ENCODE measurements at regions of chr6 and their contacts with region 1.

Region 1: DNA sequence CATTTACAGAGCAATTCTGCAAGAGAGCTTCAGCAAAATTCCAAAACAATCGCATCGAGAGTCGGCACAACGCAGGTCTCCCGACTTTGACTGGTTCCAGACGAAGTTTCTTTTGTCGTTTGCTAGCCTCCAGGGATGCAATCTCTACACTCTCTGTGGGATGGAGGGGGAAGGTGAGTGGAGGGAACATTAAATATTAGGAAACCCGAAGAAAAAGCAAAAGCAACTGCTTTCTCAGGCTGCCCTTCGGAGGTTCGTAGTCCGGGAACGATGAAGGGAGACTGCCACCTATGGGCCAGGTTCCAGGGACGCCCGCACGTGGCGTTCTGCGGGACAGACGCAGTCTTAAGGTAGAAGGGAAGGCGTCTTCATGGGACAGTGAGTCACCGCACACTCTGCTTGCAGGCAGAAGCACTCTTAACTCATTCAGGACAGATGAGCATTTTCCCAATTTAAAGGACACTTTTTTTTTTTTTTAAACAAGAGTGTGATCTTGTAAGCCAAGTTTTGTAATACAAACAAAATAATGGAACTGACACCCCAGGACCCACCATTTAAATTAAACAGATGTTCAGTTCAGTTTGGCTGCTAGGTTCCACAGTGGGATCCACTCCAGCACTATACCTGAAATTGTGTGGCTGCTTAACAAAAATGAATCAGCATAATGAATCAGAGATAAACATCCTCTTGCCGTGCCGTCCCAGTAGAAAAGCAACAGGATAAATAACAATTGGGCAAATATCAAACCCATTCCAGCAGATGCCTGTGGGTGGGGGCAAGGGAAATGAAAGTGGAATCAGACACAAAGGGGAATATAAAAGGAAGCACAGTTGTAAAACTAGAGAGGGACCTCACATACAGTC is 65.8 kb upstream of the ARMC2 start:
- DNase-seq: peak; percentile 81
- ATAC-seq: peak; percentile 88
- H3K4me3 ChIP-seq: peak overlapping the region; percentile 53
- H3K27ac ChIP-seq: peak overlapping the region; percentile 71
- H3K4me1 ChIP-seq: peaks cover 9% of the 10 kb centered on the region
- H3K27me3 ChIP-seq: no peaks in the 10 kb centered on the region
- CTCF ChIP-seq: peak; percentile 82
- POLR2A ChIP-seq: no peak
- RAD21 ChIP-seq: peak; percentile 84

Region 2: DNA sequence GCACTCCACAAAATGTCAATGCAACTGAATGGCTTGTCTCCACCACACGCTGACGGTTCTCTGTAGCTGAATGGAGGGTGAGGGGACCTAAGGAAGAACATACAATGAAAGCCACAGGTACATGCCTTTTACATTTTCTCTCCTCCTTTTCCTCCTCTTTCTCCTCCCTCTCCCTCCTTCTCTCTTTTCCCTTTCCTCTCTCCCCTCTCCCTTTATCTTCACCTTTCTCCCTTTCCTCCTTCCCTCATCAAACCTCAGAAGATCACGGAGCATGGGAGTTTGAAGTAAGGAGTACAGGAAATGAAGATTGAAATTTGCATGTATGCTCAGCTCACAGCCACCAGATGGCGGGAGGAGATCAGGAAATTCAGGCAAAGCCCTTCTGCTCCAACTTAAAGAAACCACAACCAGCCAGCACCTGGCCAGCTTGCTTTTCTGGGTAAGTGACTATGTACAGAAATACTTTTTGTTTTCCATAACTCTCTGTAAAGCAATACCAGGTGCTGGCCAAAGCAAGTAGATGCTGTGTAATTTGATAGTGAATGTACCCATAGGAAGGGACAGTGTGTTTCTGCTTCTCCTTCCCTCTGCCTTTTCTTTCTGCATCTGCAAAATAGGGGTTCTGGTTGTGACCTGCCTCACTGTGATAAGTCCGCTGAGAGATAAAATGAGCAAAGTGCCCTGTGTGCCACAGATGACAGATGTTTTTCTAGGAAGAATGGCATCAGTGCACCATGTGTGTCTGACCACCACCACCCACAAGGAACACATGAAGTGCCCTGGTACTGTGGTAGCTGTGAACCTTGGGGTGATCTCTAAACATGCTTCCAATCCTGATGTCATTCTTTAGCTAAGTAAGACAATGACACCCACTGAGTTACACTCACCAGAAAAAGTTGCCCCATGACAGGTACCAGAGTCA is 240.3 kb before region 1 on chr6:
- CTCF ChIA-PET with region 1: no interaction called
- POLR2A ChIA-PET with region 1: no interaction called
- dilution Hi-C with region 1: no loop called
- in situ Hi-C with region 1: loop called (anchors 5 kb)
- intact Hi-C with region 1: loop called (anchors 1 kb)
- DNase-seq: peak; percentile 87
- ATAC-seq: peak; percentile 86
- H3K4me3 ChIP-seq: no peak overlapping the region
- H3K27ac ChIP-seq: no peak overlapping the region
- H3K4me1 ChIP-seq: peaks cover 10% of the 10 kb centered on the region
- H3K27me3 ChIP-seq: no peaks in the 10 kb centered on the region
- CTCF ChIP-seq: peak; percentile 91
- POLR2A ChIP-seq: peak; percentile 47; the same call in 1 of the 2 replicates
- RAD21 ChIP-seq: peak; percentile 100

Region 3: DNA sequence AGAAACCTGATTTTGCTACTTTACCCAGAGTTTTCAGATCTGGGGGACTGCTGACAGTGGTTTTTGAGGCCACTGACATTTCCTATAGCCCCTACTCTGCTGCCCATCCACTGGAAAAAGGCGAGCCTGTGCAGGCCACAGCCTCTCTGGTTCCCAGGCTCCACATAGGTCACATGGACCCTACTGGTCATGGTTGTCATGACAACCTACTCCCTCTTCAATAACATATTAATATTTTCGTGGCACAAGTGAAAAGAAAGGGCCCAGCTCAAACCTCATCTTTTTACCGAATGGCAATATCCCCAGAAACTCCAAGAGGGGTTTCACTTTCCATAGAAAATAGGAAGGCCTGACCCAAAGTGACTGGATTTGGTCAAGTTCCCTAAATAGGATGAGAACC is 232.7 kb before region 1 on chr6:
- CTCF ChIA-PET with region 1: no interaction called
- POLR2A ChIA-PET with region 1: no interaction called
- dilution Hi-C with region 1: no loop called
- in situ Hi-C with region 1: loop called (anchors 5 kb)
- intact Hi-C with region 1: loop called (anchors 1 kb)
- DNase-seq: no peak
- ATAC-seq: peak; percentile 32; the same call in 1 of the 2 replicates
- H3K4me3 ChIP-seq: no peak overlapping the region
- H3K27ac ChIP-seq: no peak overlapping the region
- H3K4me1 ChIP-seq: peaks cover 11% of the 10 kb centered on the region
- H3K27me3 ChIP-seq: no peaks in the 10 kb centered on the region
- CTCF ChIP-seq: no peak
- POLR2A ChIP-seq: no peak
- RAD21 ChIP-seq: no peak

Region 4: DNA sequence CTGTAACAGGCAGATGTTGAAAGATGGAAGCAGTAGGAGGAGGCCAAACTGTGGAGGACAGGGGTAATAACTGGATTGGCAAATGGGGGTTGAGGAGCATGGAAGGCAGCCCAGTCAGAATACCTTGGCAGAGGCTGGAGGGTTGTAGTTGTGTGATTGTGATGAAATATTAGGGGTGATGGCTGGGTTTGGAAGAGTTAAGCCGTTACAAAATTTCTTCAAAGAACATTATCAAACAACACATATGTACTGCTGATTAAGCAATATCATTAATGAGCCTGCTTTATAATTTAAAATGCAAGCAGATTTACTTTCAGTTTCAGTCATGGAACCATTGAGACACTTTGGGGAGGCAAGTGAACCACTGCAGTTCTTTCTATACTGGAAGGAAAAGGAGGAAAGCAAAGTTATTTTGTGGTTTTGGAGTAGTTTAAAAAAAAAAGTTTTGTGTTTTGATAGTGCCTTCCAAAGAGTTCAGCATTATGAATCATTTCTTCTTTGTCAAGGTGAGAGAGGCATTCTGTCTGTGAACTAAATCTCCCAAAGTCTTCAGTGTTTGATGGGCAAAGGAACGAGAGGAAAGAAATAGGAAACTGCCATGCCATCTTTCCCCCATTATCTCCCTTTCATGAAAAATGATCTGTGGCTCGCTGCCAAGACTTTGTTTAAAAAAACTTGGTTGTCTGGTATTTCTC is 201.0 kb before region 1 on chr6:
- CTCF ChIA-PET with region 1: no interaction called
- POLR2A ChIA-PET with region 1: no interaction called
- dilution Hi-C with region 1: no loop called
- in situ Hi-C with region 1: no loop called
- intact Hi-C with region 1: loop called (anchors 5 kb)
- DNase-seq: peak; percentile 84
- ATAC-seq: peak; percentile 56
- H3K4me3 ChIP-seq: peak overlapping the region; percentile 2; the same call in 1 of the 2 replicates
- H3K27ac ChIP-seq: peak overlapping the region; percentile 6; the same call in 1 of the 2 replicates
- H3K4me1 ChIP-seq: peaks cover 45% of the 10 kb centered on the region
- H3K27me3 ChIP-seq: no peaks in the 10 kb centered on the region
- CTCF ChIP-seq: no peak
- POLR2A ChIP-seq: no peak
- RAD21 ChIP-seq: no peak

Region 5: GRCh38 chr6:108655806-108656651 is 126.4 kb before region 1 on chr6:
- CTCF ChIA-PET with region 1: no interaction called
- POLR2A ChIA-PET with region 1: no interaction called
- dilution Hi-C with region 1: no loop called
- in situ Hi-C with region 1: no loop called
- intact Hi-C with region 1: loop called (anchors 5 kb)
- DNase-seq: peak; percentile 90
- ATAC-seq: peak; percentile 21
- H3K4me3 ChIP-seq: no peak overlapping the region
- H3K27ac ChIP-seq: peak overlapping the region; percentile 51; the same call in 1 of the 2 replicates
- H3K4me1 ChIP-seq: peaks cover 33% of the 10 kb centered on the region
- H3K27me3 ChIP-seq: no peaks in the 10 kb centered on the region
- CTCF ChIP-seq: no peak
- POLR2A ChIP-seq: no peak
- RAD21 ChIP-seq: no peak

Region 6: GRCh38 chr6:108673602-108674001 is 108.8 kb before region 1 on chr6:
- CTCF ChIA-PET with region 1: no interaction called
- POLR2A ChIA-PET with region 1: no interaction called
- dilution Hi-C with region 1: no loop called
- in situ Hi-C with region 1: no loop called
- intact Hi-C with region 1: loop called (anchors 5 kb)
- DNase-seq: peak; percentile 29
- ATAC-seq: no peak
- H3K4me3 ChIP-seq: no peak overlapping the region
- H3K27ac ChIP-seq: no peak overlapping the region
- H3K4me1 ChIP-seq: peaks cover 22% of the 10 kb centered on the region
- H3K27me3 ChIP-seq: no peaks in the 10 kb centered on the region
- CTCF ChIP-seq: no peak
- POLR2A ChIP-seq: no peak
- RAD21 ChIP-seq: no peak

Region 7: DNA sequence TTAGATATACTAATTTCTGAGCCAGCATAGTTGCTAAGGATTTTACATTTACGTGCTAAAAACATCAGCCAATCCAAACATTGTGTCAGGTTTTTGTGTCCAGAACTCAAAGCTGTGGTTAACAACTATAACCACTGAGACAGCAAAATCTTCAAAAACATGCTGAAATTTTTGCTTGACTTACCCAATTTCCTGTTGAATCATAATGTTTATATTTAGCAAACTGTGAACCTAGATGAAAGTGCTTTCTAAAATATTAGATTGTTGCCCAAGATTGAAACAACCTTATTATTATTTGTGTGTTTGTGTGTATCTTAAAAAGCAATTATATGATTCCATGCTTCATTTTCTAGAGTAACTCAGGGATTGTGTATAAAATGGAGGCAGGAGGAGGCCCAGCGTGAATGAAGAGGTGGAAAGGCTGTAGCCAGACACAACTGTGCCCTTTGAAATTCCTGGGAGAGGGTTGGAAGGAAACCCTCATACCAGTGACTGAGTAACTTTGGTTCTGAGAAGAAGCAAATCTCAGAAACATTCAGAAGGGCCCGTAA is 113.8 kb after region 1 on chr6:
- CTCF ChIA-PET with region 1: interaction called, 3 read pairs
- POLR2A ChIA-PET with region 1: no interaction called
- dilution Hi-C with region 1: no loop called
- in situ Hi-C with region 1: no loop called
- intact Hi-C with region 1: loop called (anchors 2 kb)
- DNase-seq: peak; percentile 92
- ATAC-seq: peak; percentile 83
- H3K4me3 ChIP-seq: no peak overlapping the region
- H3K27ac ChIP-seq: peak overlapping the region; percentile 98
- H3K4me1 ChIP-seq: peaks cover 13% of the 10 kb centered on the region
- H3K27me3 ChIP-seq: no peaks in the 10 kb centered on the region
- CTCF ChIP-seq: no peak
- POLR2A ChIP-seq: no peak
- RAD21 ChIP-seq: no peak

Region 8: DNA sequence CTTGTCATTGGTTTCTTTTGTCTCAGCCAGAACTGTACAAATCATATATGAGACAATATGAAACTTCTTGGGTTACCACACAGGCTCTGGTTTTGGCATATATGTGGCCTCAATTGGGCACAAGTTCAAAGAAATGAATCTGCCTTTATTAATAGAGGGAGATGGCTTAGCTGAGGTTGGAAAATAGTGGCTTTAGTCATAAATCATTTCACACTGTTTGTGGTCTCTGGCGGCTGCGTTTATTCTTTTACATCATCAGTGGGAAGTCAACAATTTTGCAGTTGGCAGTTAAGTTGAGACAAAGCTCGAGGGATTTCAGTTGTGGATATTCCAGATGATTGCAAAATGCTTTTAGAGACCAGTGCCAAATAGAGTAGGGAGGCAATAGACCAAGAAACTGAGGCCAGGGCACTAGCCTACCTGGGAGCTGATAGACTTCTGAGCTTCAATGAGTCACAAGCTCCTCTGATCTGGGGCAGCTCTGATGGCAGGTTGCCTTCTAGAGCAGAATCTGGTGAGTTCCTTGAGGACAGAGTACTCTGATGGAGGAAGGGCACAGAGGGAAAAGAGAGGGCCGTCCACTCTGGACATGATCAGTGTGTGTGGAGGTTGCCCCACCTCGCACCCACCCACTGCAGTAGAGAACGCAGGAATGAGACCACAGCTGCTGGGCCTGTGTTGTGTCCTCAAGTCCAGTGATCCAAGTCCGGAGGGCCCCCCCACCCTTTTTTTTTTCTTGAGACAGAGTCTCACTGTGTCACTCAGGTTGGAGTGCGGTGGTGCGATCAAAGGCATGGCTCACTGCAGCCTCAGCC is 139.3 kb after region 1 on chr6:
- CTCF ChIA-PET with region 1: no interaction called
- POLR2A ChIA-PET with region 1: no interaction called
- dilution Hi-C with region 1: no loop called
- in situ Hi-C with region 1: no loop called
- intact Hi-C with region 1: no loop called
- DNase-seq: peak; percentile 31
- ATAC-seq: no peak
- H3K4me3 ChIP-seq: no peak overlapping the region
- H3K27ac ChIP-seq: no peak overlapping the region
- H3K4me1 ChIP-seq: no peaks in the 10 kb centered on the region
- H3K27me3 ChIP-seq: no peaks in the 10 kb centered on the region; the same call in 1 of the 2 replicates
- CTCF ChIP-seq: no peak
- POLR2A ChIP-seq: no peak
- RAD21 ChIP-seq: no peak